OCI-LY7 (cell line): ENCODE measurements at regions of chr1 and their contacts with region 1.

Region 1: GRCh38 chr1:11719313-11720032 is 16.5 kb upstream of the AGTRAP start:
- DNase-seq: peak; percentile 83
- H3K4me3 ChIP-seq: peak overlapping the region; percentile 63
- H3K27ac ChIP-seq: peak overlapping the region; percentile 60
- H3K4me1 ChIP-seq: peaks cover 13% of the 10 kb centered on the region
- CTCF ChIP-seq: peak; percentile 100

Region 2: DNA sequence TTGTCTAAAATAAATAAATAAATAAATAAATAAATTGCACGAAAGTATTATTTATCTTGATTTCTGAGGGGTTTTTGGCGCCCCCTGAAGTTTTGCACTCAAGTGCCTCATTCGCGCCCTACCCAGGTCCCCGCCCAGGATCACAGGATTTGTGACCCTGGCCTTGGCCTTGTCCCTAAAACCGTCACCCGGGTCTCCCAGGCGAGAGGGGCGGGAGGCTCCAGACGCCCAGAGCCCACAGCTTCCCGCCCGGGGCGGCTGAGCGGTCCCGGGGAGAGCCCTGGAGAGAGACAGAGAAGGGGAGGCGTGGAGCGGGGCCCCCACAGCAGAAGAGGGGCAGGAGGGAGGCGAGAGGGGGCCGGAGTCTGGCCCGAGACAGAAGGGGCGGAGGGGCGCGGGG is 831.2 kb before region 1 on chr1:
- CTCF ChIA-PET with region 1: no interaction called
- POLR2A ChIA-PET with region 1: no interaction called
- intact Hi-C with region 1: no loop called
- DNase-seq: no peak
- H3K4me3 ChIP-seq: no peak overlapping the region
- H3K27ac ChIP-seq: no peak overlapping the region
- H3K4me1 ChIP-seq: no peaks in the 10 kb centered on the region
- CTCF ChIP-seq: no peak

Region 3: GRCh38 chr1:11661103-11661502 is 58.4 kb before region 1 on chr1:
- CTCF ChIA-PET with region 1: interaction called, 3 read pairs
- POLR2A ChIA-PET with region 1: interaction called, 3 read pairs
- intact Hi-C with region 1: loop called (anchors 1 kb)
- DNase-seq: no peak
- H3K4me3 ChIP-seq: no peak overlapping the region
- H3K27ac ChIP-seq: no peak overlapping the region
- H3K4me1 ChIP-seq: no peaks in the 10 kb centered on the region
- CTCF ChIP-seq: no peak

Region 4: GRCh38 chr1:11681071-11681771 is 38.3 kb before region 1 on chr1 and contains the start of gene MAD2L2:
- CTCF ChIA-PET with region 1: interaction called, 4 read pairs
- POLR2A ChIA-PET with region 1: interaction called, 6 read pairs
- intact Hi-C with region 1: loop called (anchors 5 kb)
- DNase-seq: peak; percentile 92
- H3K4me3 ChIP-seq: peak within 1 kb of the TSS; percentile 86
- H3K27ac ChIP-seq: peak within 1 kb of the TSS; percentile 95
- H3K4me1 ChIP-seq: peaks cover 27% of the 10 kb centered on the region
- CTCF ChIP-seq: no peak
- total RNA-seq, gene MAD2L2: 121 and 144 TPM in 2 replicates

Region 5: GRCh38 chr1:12314333-12314903 is 594.9 kb after region 1 on chr1:
- CTCF ChIA-PET with region 1: no interaction called
- POLR2A ChIA-PET with region 1: no interaction called
- intact Hi-C with region 1: no loop called
- DNase-seq: peak; percentile 23
- H3K4me3 ChIP-seq: no peak overlapping the region
- H3K27ac ChIP-seq: no peak overlapping the region
- H3K4me1 ChIP-seq: no peaks in the 10 kb centered on the region
- CTCF ChIP-seq: peak; percentile 84